ENCODE measurements at regions of chr2 and their contacts with region 1.

Region 1: GRCh38 chr2:223860809-223861738 is 23.7 kb upstream of the AP1S3 start:
- DNase-seq: peak; percentile 94
- H3K4me3 ChIP-seq: peak overlapping the region in 2 of 3 experiments; percentile 20 to 26
- H3K27ac ChIP-seq: peak overlapping the region; percentile 89
- H3K4me1 ChIP-seq: peaks cover 19% of the 10 kb centered on the region
- H3K27me3 ChIP-seq: no peaks in the 10 kb centered on the region
- CTCF ChIP-seq: peak; percentile 9 to 50

Region 2: DNA sequence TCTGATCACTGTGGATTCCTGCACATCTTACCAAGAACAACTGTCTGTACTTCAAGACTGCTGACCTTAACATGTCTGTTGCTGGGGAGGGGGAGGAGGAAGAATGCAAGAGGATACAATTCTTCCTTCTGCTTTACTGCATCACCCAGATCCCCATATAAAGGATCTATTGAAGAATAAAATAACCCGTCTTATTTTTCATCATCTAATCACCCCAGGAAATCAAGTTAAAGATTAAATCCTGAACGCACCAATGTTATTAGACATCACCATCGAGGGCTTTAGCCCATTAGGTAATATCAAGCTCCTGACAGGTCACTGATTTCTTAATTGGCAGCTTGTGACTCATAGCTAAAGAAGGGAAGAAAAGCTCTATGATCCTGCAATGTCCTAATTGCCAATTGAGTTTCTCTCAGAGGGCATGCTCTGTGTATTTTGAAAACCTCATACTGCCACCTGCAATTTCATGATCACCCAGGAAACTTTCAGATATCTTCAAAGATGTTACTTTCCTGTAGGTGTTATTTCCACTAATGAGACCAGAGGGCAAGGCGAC is 884.5 kb before region 1 on chr2:
- CTCF ChIA-PET with region 1: no interaction called
- dilution Hi-C with region 1: no loop called
- in situ Hi-C with region 1: no loop called
- intact Hi-C with region 1: loop called (anchors 5 kb)
- DNase-seq: no peak
- H3K4me3 ChIP-seq: no peak overlapping the region
- H3K27ac ChIP-seq: no peak overlapping the region
- H3K4me1 ChIP-seq: peaks cover 15% of the 10 kb centered on the region
- H3K27me3 ChIP-seq: no peaks in the 10 kb centered on the region
- CTCF ChIP-seq: no peak

Region 3: DNA sequence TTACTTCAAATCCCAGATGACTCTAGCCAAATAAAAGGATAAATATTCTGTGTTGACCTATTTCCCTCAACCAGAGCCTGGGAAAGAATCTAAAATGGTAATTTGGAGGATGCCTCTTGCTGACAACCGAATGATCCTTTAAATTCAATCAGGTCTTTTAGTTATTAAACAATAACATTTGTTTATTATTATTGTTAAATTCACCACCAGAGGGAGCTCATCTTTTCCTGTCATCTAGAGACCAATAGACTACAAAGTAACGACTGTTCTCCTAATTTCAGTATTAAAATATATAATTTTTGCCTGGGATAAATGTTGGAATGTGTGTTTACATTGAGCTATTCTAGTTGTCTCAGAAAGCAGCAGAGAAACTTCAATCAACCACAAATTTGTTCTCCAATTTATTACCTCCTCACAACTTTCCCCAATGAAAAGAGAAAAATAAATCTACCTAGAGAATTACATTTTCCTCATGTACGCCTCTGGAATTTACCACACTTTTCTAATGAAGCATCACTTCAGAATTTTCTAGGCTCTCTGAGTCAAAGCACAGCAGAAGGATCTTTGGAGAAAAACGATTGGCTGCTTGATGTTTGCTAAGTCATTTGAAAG is 401.6 kb before region 1 on chr2:
- CTCF ChIA-PET with region 1: no interaction called
- dilution Hi-C with region 1: loop called (anchors 25 kb)
- in situ Hi-C with region 1: no loop called
- intact Hi-C with region 1: loop called (anchors 10 kb)
- DNase-seq: peak; percentile 12
- H3K4me3 ChIP-seq: no peak overlapping the region
- H3K27ac ChIP-seq: peak overlapping the region; percentile 1
- H3K4me1 ChIP-seq: peaks cover 17% of the 10 kb centered on the region
- H3K27me3 ChIP-seq: no peaks in the 10 kb centered on the region
- CTCF ChIP-seq: peak; percentile 29 to 43

Region 4: DNA sequence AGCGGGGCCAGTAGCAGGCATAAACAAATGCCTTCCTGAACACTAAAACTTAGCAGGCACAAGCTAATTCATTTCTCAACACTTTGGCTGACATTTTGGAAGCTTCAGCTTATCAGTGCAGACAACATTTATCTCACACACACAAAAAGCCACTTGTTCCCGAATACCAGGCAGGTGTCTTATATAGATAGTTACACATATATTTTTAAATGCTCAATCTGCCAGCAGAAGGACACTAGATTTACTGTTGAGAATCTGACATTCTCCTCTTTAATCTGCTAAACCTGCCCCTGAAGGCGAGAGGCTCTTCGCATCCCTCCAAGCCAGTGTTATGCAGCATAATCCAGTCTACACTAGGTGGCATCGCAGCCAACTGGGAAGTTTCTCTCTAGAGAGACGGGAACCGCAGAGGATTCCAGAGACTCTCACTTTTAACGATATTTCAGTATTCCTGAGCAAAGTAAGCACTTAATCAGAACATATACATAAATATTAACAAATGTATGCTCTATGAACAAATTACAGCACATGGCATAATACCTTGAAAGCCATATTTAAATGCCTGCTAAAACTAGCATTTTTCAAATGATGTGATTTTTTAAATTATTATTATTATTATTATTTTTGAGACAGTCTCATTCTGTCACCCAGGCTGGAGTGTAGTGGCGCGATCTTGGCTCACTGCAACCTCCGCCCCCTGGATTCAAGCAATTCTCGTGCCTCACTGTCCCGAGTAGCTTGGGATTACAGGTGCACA is 168.7 kb before region 1 on chr2:
- CTCF ChIA-PET with region 1: interaction called, 3 read pairs
- dilution Hi-C with region 1: no loop called
- in situ Hi-C with region 1: no loop called
- intact Hi-C with region 1: loop called (anchors 1 kb)
- DNase-seq: peak; percentile 60
- H3K4me3 ChIP-seq: no peak overlapping the region
- H3K27ac ChIP-seq: no peak overlapping the region
- H3K4me1 ChIP-seq: peaks cover 28% of the 10 kb centered on the region
- H3K27me3 ChIP-seq: no peaks in the 10 kb centered on the region
- CTCF ChIP-seq: peak; percentile 87 to 92

Region 5: DNA sequence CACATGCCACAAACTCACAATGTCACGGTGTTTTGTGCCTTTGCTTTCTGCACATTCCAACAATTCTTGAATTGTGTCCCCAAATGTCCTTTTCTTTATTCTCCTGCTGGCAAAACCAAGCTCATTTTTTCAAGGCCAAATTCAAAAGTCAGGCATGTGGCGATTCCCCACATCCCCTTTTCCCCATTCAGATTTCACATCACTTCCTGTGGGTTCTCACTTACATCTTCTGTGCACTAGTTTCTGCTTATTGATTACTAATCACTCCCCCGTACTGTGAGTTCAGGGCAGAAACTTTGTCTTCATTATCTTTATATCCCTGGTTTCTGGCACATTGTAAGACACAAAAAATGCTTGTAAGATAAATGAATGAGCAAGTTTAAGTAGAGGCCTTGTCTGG is 92.9 kb before region 1 on chr2:
- CTCF ChIA-PET with region 1: no interaction called
- dilution Hi-C with region 1: no loop called
- in situ Hi-C with region 1: no loop called
- intact Hi-C with region 1: no loop called
- DNase-seq: no peak
- H3K4me3 ChIP-seq: no peak overlapping the region
- H3K27ac ChIP-seq: no peak overlapping the region
- H3K4me1 ChIP-seq: no peaks in the 10 kb centered on the region
- H3K27me3 ChIP-seq: no peaks in the 10 kb centered on the region
- CTCF ChIP-seq: no peak

Region 6: GRCh38 chr2:223779877-223780276 is 81.2 kb before region 1 on chr2:
- CTCF ChIA-PET with region 1: no interaction called
- dilution Hi-C with region 1: no loop called
- in situ Hi-C with region 1: no loop called
- intact Hi-C with region 1: loop called (anchors 1 kb)
- DNase-seq: peak; percentile 44
- H3K4me3 ChIP-seq: no peak overlapping the region
- H3K27ac ChIP-seq: no peak overlapping the region
- H3K4me1 ChIP-seq: peaks cover 8% of the 10 kb centered on the region
- H3K27me3 ChIP-seq: no peaks in the 10 kb centered on the region
- CTCF ChIP-seq: peak; percentile 35 to 40

Region 7: GRCh38 chr2:223846525-223846924 is 14.5 kb before region 1 on chr2:
- CTCF ChIA-PET with region 1: no interaction called
- dilution Hi-C with region 1: no loop called
- in situ Hi-C with region 1: no loop called
- intact Hi-C with region 1: loop called (anchors 1 kb)
- DNase-seq: peak; percentile 90
- H3K4me3 ChIP-seq: no peak overlapping the region
- H3K27ac ChIP-seq: peak overlapping the region; percentile 55
- H3K4me1 ChIP-seq: peaks cover 9% of the 10 kb centered on the region
- H3K27me3 ChIP-seq: no peaks in the 10 kb centered on the region
- CTCF ChIP-seq: no peak

Region 8: GRCh38 chr2:224284134-224284946 is 423.3 kb after region 1 on chr2:
- CTCF ChIA-PET with region 1: no interaction called
- dilution Hi-C with region 1: no loop called
- in situ Hi-C with region 1: no loop called
- intact Hi-C with region 1: loop called (anchors 1 kb)
- DNase-seq: peak; percentile 43
- H3K4me3 ChIP-seq: no peak overlapping the region
- H3K27ac ChIP-seq: no peak overlapping the region
- H3K4me1 ChIP-seq: no peaks in the 10 kb centered on the region
- H3K27me3 ChIP-seq: peaks cover 2% of the 10 kb centered on the region
- CTCF ChIP-seq: peak; percentile 54 to 80